K562 (cell line): ENCODE measurements at regions of chr22 and their contacts with region 1.

Region 1: DNA sequence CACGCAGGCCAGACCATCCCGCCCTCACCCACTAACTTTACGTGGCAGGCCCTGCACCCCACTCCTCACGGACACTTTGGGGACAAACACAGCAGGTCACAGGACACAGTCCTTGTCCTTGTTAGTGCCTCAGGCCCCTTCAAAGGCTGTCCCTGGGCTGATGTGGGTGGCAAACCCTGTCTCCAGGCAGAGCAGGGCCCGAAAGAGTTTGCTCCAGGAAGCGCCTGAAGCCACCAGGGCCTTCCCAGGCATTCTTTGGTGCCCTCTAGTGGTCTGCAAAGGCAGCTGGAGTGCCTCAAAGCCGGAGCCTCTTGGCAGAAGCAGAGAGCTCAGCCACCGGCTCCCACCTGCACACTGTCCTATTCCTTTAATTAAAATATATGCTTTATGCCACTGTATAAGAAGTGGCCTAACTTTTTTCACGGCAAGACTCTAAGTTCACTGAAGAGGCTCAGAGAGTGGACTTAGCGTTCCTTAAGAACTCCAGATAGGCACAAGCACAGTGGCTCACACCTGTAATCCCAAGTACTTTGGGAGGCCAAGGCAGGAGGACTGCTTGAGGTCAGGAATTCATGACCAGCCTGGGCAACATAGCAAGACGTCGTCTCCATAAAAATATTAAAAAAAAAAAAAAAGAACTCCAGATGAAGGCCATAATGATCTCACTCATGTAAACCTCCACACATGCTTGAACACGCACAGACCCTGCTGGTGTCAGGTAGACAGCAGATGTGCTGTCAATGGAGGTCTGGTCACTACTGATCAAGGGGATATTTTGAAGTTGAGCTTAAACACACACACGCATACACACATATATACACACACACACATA is 11.1 kb downstream of the TXN2 start:
- DNase-seq: peak; percentile 66 to 84 (median 69)
- ATAC-seq: peak; percentile 92
- H3K4me3 ChIP-seq: no peak overlapping the region
- H3K27ac ChIP-seq: no peak overlapping the region; the same call in 2 of the 3 replicates
- H3K4me1 ChIP-seq: peaks cover 25 to 28% of the 10 kb centered on the region in 2 experiments
- H3K27me3 ChIP-seq: no peaks in the 10 kb centered on the region
- CTCF ChIP-seq: peak; percentile 83 to 89 (median 84)
- EP300 ChIP-seq: no peak
- POLR2A ChIP-seq: 0 out of 2 replicates have a peak, but pooled peaks have one; percentile 29
- RAD21 ChIP-seq: peak; percentile 84 to 90

Region 2: GRCh38 chr22:36294801-36295200 is 175.6 kb before region 1 on chr22:
- CTCF ChIA-PET with region 1: no interaction called
- POLR2A ChIA-PET with region 1: interaction called, 4 read pairs
- in situ Hi-C with region 1: loop called (anchors 5 kb)
- intact Hi-C with region 1: no loop called
- DNase-seq: no peak
- ATAC-seq: no peak
- H3K4me3 ChIP-seq: no peak overlapping the region
- H3K27ac ChIP-seq: no peak overlapping the region
- H3K4me1 ChIP-seq: peaks cover 0 to 8% of the 10 kb centered on the region in 2 experiments; a peak in 1 of 5 replicates
- H3K27me3 ChIP-seq: no peaks in the 10 kb centered on the region
- CTCF ChIP-seq: no peak
- EP300 ChIP-seq: no peak
- POLR2A ChIP-seq: no peak
- RAD21 ChIP-seq: no peak

Region 3: DNA sequence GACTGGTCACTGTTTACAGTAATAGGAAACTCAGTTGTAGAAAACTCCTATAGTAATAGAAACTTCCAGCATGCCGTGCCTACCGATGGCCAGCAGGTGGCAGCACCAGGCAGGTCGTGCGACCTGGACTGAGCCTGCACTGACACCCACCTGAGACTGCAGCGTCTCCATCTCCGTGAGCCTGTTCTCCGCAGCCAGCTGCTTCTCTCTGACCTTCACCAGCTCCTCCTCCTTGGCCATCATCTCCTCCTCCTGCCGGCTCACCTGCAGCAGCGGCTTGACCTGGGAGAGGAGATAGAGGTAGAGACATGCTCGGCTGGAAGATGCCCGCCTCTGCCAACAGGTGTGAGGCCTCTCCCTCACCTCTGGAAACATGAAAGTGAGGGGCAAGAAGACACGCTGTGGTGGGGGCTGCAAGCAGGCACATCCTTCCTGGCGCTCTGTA is 169.0 kb before region 1 on chr22:
- CTCF ChIA-PET with region 1: interaction called, 18 read pairs
- POLR2A ChIA-PET with region 1: interaction called, 5 read pairs
- in situ Hi-C with region 1: loop called (anchors 5 kb)
- intact Hi-C with region 1: loop called (anchors 5 kb)
- DNase-seq: peak; percentile 61 to 72 (median 67)
- ATAC-seq: peak; percentile 94
- H3K4me3 ChIP-seq: no peak overlapping the region
- H3K27ac ChIP-seq: no peak overlapping the region
- H3K4me1 ChIP-seq: no peaks in the 10 kb centered on the region
- H3K27me3 ChIP-seq: no peaks in the 10 kb centered on the region
- CTCF ChIP-seq: peak; percentile 76 to 86 (median 82)
- EP300 ChIP-seq: no peak
- POLR2A ChIP-seq: no peak
- RAD21 ChIP-seq: peak; percentile 46 to 81

Region 4: DNA sequence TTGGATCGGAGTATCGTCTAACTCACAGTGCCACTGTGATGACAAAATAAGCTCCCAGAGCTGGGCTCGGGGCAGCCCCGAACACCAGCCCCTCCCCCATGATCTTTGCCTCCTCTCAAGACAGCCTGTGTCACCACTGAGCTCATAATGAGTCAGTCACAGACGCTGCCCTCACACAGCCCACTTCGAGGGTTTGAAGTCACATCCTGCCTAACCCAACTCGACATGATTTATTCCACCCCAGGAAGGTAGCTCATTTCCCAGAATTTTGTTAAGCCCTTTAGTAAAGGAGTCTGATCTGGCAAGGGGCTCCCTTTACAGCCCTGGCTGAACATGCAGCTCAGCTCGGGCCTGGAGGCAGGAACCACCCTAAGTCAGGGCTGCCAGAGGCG is 105.4 kb before region 1 on chr22:
- CTCF ChIA-PET with region 1: no interaction called
- POLR2A ChIA-PET with region 1: interaction called, 4 read pairs
- in situ Hi-C with region 1: no loop called
- intact Hi-C with region 1: loop called (anchors 5 kb)
- DNase-seq: peak; percentile 45 to 82 (median 56)
- ATAC-seq: peak; percentile 35
- H3K4me3 ChIP-seq: no peak overlapping the region
- H3K27ac ChIP-seq: no peak overlapping the region
- H3K4me1 ChIP-seq: peaks cover 30 to 52% of the 10 kb centered on the region in 2 experiments
- H3K27me3 ChIP-seq: no peaks in the 10 kb centered on the region
- CTCF ChIP-seq: no peak
- EP300 ChIP-seq: no peak; the same call in 1 of the 2 replicates
- POLR2A ChIP-seq: no peak
- RAD21 ChIP-seq: no peak